MCF 10A (cell line): ENCODE measurements at regions of chr2 and their contacts with region 1.

Region 1: GRCh38 chr2:200483729-200484198 is 26.1 kb downstream of the KCTD18 start:
- DNase-seq: peak; percentile 63
- H3K4me3 Mint-ChIP-seq: no peak overlapping the region
- H3K27ac Mint-ChIP-seq: no peak overlapping the region
- H3K4me1 Mint-ChIP-seq: peaks cover 19% of the 10 kb centered on the region
- H3K27me3 Mint-ChIP-seq: no peaks in the 10 kb centered on the region
- CTCF ChIP-seq: peak; percentile 57

Region 2: GRCh38 chr2:199806179-199806578 is 677.6 kb before region 1 on chr2:
- CTCF ChIA-PET with region 1: no interaction called
- POLR2A ChIA-PET with region 1: no interaction called
- intact Hi-C with region 1: no loop called
- DNase-seq: no peak
- H3K4me3 Mint-ChIP-seq: no peak overlapping the region
- H3K27ac Mint-ChIP-seq: no peak overlapping the region
- H3K4me1 Mint-ChIP-seq: no peaks in the 10 kb centered on the region
- H3K27me3 Mint-ChIP-seq: peaks cover 3% of the 10 kb centered on the region
- CTCF ChIP-seq: no peak

Region 3: DNA sequence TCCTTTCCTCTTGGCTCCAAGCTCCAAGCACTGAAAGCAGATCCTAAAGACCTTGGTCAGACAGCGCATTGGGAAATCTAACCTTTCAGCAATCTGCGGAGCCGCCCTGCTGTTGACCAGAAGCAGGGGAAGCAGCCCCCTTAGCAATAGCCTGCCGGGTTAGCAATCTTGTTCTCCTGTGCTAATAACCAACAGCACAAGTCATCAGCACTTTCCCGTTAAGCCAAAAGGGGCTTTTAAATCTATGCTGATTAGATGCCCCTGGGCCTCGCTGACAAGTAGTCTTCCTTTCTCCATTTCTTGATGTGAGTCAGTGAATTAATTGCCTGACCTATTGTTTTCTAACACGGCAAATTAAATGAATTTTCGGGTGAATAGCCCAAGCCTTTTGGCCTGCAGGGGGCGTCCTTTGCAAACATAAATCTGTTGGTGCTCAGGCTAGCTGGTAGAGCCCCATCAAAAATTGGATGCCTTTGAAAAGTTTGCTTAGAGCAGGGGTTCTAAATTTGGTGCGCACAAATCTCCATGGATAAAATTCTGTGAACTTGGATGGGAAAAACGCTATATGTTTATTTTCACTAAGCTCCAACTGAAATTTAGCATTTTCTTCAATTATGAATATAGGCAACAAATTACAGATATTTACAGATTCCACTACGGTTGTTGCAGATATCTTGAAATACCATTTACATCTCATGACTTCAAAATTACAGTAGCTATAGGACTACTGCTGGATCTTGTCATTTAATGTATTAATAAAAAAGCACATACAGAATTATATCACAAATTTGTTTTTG is 503.7 kb before region 1 on chr2:
- CTCF ChIA-PET with region 1: interaction called, 239 read pairs
- POLR2A ChIA-PET with region 1: interaction called, 11 read pairs
- intact Hi-C with region 1: loop called (anchors 1 kb)
- DNase-seq: peak; percentile 82
- H3K4me3 Mint-ChIP-seq: no peak overlapping the region
- H3K27ac Mint-ChIP-seq: peak overlapping the region; percentile 59
- H3K4me1 Mint-ChIP-seq: peaks cover 29% of the 10 kb centered on the region
- H3K27me3 Mint-ChIP-seq: no peaks in the 10 kb centered on the region
- CTCF ChIP-seq: peak; percentile 78

Region 4: DNA sequence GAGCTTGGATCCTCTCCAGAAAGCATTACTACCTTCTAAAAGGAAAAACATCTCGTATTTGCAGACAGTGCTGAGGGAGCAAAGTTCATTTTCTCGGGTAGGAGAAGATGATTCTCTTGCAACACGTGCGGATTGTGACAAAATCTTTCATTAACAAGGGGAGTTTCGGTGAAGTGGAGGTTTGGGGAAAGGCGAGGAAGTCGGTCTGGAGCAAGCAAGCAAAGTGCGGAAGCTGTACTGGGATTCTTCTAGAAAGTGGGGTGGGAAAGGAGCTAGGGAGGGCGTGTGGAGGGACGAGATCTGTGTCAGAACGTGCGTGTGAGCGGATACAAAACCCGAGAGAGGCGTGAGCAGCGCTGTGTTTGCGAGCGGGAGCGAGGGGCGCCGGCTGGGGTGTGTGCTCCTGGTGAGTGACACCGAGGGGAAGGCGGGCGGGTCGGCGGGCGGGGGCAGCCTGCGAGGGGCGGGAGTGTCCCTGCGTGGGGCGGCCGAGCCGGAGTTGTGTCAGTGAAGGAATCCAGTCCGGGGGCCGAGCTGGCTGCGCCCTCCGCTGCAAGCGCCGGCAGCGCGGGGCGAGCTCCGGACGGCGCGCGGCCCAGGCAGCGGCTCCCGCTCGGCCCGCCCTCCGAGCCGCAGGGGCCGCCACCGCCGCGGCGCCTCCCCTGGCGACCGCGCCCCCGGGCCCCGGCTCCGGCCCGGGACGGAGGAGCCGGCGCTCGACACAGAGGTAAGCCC is 177.4 kb before region 1 on chr2 and contains the start of gene SPATS2L:
- CTCF ChIA-PET with region 1: interaction called, 17 read pairs
- POLR2A ChIA-PET with region 1: interaction called, 3 read pairs
- intact Hi-C with region 1: loop called (anchors 5 kb)
- DNase-seq: peak; percentile 63
- H3K4me3 Mint-ChIP-seq: peak within 1 kb of the TSS; percentile 99
- H3K27ac Mint-ChIP-seq: peak within 1 kb of the TSS; percentile 94
- H3K4me1 Mint-ChIP-seq: peaks cover 45% of the 10 kb centered on the region
- H3K27me3 Mint-ChIP-seq: no peaks in the 10 kb centered on the region
- CTCF ChIP-seq: no peak
- total RNA-seq, gene SPATS2L: 67.5 and 68.3 TPM in 2 replicates

Region 5: DNA sequence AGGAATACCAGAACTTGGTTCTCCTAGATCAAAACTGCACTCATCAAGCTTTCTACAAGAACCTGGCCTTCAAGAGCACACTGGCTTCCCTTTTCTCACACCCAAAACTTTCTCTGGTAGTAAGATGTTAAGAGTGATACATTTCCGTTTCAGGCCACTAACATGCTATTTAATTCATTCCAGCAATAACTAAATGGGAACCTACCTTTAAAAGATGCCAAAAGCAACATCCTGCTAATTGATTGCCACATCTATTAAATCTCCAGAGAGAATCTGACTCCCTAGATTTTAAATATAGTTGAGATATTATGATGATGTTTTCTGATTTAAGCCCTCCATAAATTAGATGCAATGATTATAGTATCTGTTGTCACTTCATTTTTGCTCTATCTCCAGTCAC is 45.5 kb before region 1 on chr2:
- CTCF ChIA-PET with region 1: no interaction called
- POLR2A ChIA-PET with region 1: no interaction called
- intact Hi-C with region 1: no loop called
- DNase-seq: no peak
- H3K4me3 Mint-ChIP-seq: no peak overlapping the region
- H3K27ac Mint-ChIP-seq: no peak overlapping the region
- H3K4me1 Mint-ChIP-seq: no peaks in the 10 kb centered on the region
- H3K27me3 Mint-ChIP-seq: no peaks in the 10 kb centered on the region
- CTCF ChIP-seq: no peak

Region 6: DNA sequence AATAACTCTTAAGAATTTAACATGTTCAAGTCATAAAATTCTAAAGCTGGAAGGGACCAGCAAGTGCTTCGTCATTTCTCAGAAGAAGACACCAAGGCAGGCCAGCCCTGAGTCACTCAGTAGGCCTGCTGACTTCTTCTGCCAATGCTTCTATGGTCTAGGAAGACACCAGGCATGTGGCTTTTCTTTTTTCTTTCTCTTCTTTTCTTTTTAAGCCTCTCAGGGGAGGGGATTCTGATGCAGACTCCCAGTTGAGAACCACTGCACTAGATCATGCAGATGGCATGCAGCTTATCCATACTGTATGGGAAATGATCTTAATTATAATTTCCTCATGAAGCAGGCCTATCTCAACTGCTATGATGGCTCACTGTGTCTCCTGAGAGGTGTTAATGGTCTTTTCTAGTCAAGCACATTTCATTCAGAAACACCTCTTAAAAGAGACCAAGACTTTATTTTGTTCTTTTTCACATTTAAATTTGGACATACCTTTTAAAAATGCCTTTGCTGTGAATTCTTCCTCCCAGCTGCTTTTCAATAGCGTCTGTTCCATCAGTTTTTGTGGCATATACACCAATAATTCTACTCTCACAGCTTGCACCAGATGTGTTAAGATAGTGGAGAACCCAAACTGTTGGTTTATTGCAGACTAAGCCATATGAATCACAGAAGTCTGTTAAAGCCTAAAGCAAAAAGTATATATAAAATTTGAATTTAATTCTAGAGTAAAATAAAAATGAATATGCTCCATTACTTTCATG is 14.8 kb after region 1 on chr2:
- CTCF ChIA-PET with region 1: interaction called, 28 read pairs
- POLR2A ChIA-PET with region 1: interaction called, 10 read pairs
- intact Hi-C with region 1: no loop called
- DNase-seq: no peak
- H3K4me3 Mint-ChIP-seq: no peak overlapping the region
- H3K27ac Mint-ChIP-seq: no peak overlapping the region
- H3K4me1 Mint-ChIP-seq: no peaks in the 10 kb centered on the region
- H3K27me3 Mint-ChIP-seq: no peaks in the 10 kb centered on the region
- CTCF ChIP-seq: no peak

Region 7: DNA sequence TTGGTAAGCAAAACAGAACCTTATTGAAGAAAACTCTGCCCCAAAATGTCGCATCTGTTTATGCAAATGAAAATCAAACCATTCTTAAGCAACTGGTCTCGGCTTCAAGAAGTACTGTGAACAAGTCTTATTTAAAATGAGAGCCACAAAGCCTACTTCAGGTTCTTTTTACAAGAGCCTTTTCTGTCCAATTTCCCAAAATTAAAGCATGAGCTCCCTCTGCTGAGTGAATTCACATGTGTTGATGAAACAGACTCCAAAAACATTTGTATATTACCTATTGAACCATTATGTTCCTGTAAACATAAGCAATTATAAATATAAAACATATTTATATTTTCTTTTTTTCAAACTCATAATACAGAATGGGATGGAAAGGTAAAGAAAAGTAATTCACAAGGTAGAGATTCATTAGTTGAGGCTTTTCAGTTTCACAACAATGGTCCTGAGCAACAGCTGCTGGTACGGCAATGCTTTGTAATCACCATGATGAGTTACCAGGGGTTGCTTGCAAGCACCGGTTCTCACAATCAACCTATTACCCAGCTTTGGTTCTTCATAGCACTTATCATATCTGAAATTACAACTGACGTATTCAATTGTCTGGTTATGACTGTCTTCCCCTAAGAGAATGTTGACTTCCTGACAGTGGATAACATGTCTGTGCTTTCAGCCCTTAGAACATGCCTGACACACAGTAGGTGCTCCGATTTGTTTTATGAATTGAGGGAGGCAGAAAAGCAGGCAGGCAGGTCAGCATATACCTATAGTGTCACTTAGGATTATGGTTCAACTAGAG is 219.6 kb after region 1 on chr2:
- CTCF ChIA-PET with region 1: interaction called, 72 read pairs
- POLR2A ChIA-PET with region 1: no interaction called
- intact Hi-C with region 1: loop called (anchors 1 kb)
- DNase-seq: peak; percentile 77
- H3K4me3 Mint-ChIP-seq: no peak overlapping the region
- H3K27ac Mint-ChIP-seq: no peak overlapping the region
- H3K4me1 Mint-ChIP-seq: peaks cover 2% of the 10 kb centered on the region
- H3K27me3 Mint-ChIP-seq: no peaks in the 10 kb centered on the region
- CTCF ChIP-seq: peak; percentile 66